Activated T-helper 1 cell treated with anti-CD3 and anti-CD28 coated beads, Interleukin-12 subunit alpha, Interleukin-12 subunit beta, Interleukin-2, Interleukin-4 antibody, amounts not matched to agents 30 ng/mL and 10 ng/mL and 1 ng/mL, durations not matched to agents 14 hours and 24 hours and 36 hours (primary cell): ENCODE measurements at regions of chr10 and their contacts with region 1.

Region 1: GRCh38 chr10:58299580-58299979 is 30.6 kb downstream of the CISD1 start:
- DNase-seq: peak; percentile 25
- H3K4me3 Mint-ChIP-seq: no peak overlapping the region
- H3K27ac Mint-ChIP-seq: no peak overlapping the region
- H3K4me1 Mint-ChIP-seq: peaks cover 4% of the 10 kb centered on the region
- H3K27me3 Mint-ChIP-seq: peaks cover 12% of the 10 kb centered on the region

Region 2: GRCh38 chr10:58268870-58269605 is 30.5 kb before region 1 on chr10 and contains the start of gene CISD1:
- intact Hi-C with region 1: no loop called
- DNase-seq: peak; percentile 95
- H3K4me3 Mint-ChIP-seq: peak within 1 kb of the TSS; percentile 94
- H3K27ac Mint-ChIP-seq: peak within 1 kb of the TSS; percentile 98
- H3K4me1 Mint-ChIP-seq: peaks cover 40% of the 10 kb centered on the region
- H3K27me3 Mint-ChIP-seq: no peaks in the 10 kb centered on the region
- total RNA-seq, gene CISD1: 50.4 and 56.0 TPM in 2 replicates

Region 3: GRCh38 chr10:58334817-58335305 is 35.3 kb after region 1 on chr10 and contains the start of gene UBE2D1:
- intact Hi-C with region 1: loop called (anchors 2 kb)
- DNase-seq: peak; percentile 73
- H3K4me3 Mint-ChIP-seq: peak within 1 kb of the TSS; percentile 92
- H3K27ac Mint-ChIP-seq: peak within 1 kb of the TSS; percentile 80
- H3K4me1 Mint-ChIP-seq: peaks cover 14% of the 10 kb centered on the region
- H3K27me3 Mint-ChIP-seq: peaks cover 8% of the 10 kb centered on the region
- total RNA-seq, gene UBE2D1: 17.9 and 19.6 TPM in 2 replicates

Region 4: GRCh38 chr10:58641095-58641531 is 341.5 kb after region 1 on chr10:
- intact Hi-C with region 1: no loop called
- DNase-seq: no peak
- H3K4me3 Mint-ChIP-seq: no peak overlapping the region
- H3K27ac Mint-ChIP-seq: no peak overlapping the region
- H3K4me1 Mint-ChIP-seq: no peaks in the 10 kb centered on the region
- H3K27me3 Mint-ChIP-seq: no peaks in the 10 kb centered on the region